Body of pancreas (tissue), 4 donors: ENCODE measurements at regions of chr2 and their contacts with region 1.

Region 1: GRCh38 chr2:96554293-96555145 is 18.0 kb downstream of the ARID5A start:
- DNase-seq: peak; percentile 63 to 78 (median 72)
- ATAC-seq: peak; percentile 45
- H3K4me3 ChIP-seq: no peak overlapping the region
- H3K27ac ChIP-seq: no peak overlapping the region
- H3K4me1 ChIP-seq: peaks cover 17% of the 10 kb centered on the region
- H3K27me3 ChIP-seq: no peaks in the 10 kb centered on the region
- CTCF ChIP-seq: peak; percentile 72 to 93 (median 84)
- POLR2A ChIP-seq: no peak

Region 2: GRCh38 chr2:96536445-96537065 is 18.0 kb before region 1 on chr2 and contains the start of gene ARID5A:
- intact Hi-C with region 1: no loop called
- DNase-seq: peak; percentile 92 to 95 (median 94)
- ATAC-seq: peak; percentile 88
- H3K4me3 ChIP-seq: peak within 1 kb of the TSS; percentile 77 to 89
- H3K27ac ChIP-seq: peak within 1 kb of the TSS; percentile 42 to 91 (median 70)
- H3K4me1 ChIP-seq: peaks cover 27% of the 10 kb centered on the region
- H3K27me3 ChIP-seq: no peaks in the 10 kb centered on the region
- CTCF ChIP-seq: peak in 6 of 7 experiments; percentile 35 to 59 (median 50)
- POLR2A ChIP-seq: peak; percentile 60 to 78 (median 74)
- total RNA-seq, gene ARID5A: 8.9 to 9.6 TPM

Region 3: GRCh38 chr2:96801005-96801785 is 246.7 kb after region 1 on chr2:
- intact Hi-C with region 1: loop called (anchors 5 kb)
- DNase-seq: peak; percentile 80 to 88 (median 84)
- ATAC-seq: peak; percentile 94
- H3K4me3 ChIP-seq: no peak overlapping the region
- H3K27ac ChIP-seq: no peak overlapping the region
- H3K4me1 ChIP-seq: peaks cover 7% of the 10 kb centered on the region
- H3K27me3 ChIP-seq: no peaks in the 10 kb centered on the region
- CTCF ChIP-seq: peak; percentile 80 to 94 (median 91)
- POLR2A ChIP-seq: no peak